GM12878 (cell line): ENCODE measurements at regions of chr10 and their contacts with region 1.

Region 1: DNA sequence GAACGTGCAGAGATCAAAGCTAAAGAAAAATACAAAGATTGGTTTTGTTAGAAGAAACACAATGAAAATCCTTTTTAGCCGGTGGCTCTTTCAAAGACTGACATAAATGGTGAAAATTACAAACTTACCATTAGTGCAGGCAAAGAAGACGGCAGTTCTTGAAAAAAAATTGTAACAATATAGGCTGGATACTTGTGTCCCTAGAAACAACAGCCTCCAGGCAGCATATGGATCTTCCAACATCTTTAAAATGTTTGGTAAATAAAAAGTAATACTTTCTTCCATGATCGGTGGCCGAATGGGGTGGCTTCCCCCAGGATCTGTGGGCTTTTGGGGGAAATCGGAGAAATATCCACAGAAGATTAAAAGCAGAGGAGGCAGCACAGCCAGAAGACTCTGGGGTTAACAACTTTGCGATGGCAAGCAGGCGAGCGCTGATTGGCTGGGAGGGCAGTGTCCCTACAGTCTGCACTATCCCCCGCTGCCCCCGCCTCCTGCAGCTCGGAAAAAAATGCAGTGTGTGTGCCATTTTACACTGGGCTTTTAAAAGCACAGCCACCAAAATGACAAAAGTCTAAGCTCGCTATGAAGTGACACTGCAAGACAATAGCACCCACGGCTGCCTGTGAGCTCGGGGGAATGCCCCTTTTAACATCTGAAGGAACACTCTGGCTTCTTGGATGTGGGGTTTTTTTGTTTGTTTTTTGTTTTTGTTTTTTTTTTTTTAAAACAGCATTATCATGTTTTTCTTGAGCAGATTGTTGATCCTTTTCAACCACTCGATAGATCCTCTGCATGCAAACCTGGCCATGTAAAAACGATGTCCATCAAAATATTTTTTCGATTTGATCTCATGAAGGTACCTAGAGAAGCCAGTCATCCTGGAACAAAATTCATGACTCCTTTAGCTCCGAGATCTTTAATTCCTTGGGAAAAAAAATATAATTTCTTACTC is 31.7 kb upstream of the EPC1 start:
- DNase-seq: peak; percentile 72
- ATAC-seq: peak; percentile 96
- H3K4me3 ChIP-seq: peak overlapping the region; percentile 77
- H3K27ac ChIP-seq: peak overlapping the region; percentile 75
- H3K4me1 ChIP-seq: no peaks in the 10 kb centered on the region
- H3K27me3 ChIP-seq: no peaks in the 10 kb centered on the region
- CTCF ChIP-seq: no peak
- EP300 ChIP-seq: no peak
- POLR2A ChIP-seq: peak; percentile 74
- RAD21 ChIP-seq: no peak

Region 2: GRCh38 chr10:31928549-31929260 is 449.9 kb before region 1 on chr10 and contains the start of gene ARHGAP12:
- CTCF ChIA-PET with region 1: no interaction called
- POLR2A ChIA-PET with region 1: no interaction called
- RAD21 ChIA-PET with region 1: no interaction called
- SMC1A ChIA-PET with region 1: no interaction called
- in situ Hi-C with region 1: no loop called
- intact Hi-C with region 1: loop called (anchors 10 kb)
- DNase-seq: no peak
- ATAC-seq: peak; percentile 84
- H3K4me3 ChIP-seq: peak within 1 kb of the TSS; percentile 70
- H3K27ac ChIP-seq: peak within 1 kb of the TSS; percentile 53
- H3K4me1 ChIP-seq: peaks cover 14% of the 10 kb centered on the region
- H3K27me3 ChIP-seq: no peaks in the 10 kb centered on the region
- CTCF ChIP-seq: no peak
- EP300 ChIP-seq: no peak
- POLR2A ChIP-seq: peak; percentile 89
- RAD21 ChIP-seq: no peak
- polyA plus RNA-seq, gene ARHGAP12: 5.4 to 7.7 TPM

Region 3: GRCh38 chr10:32055813-32056600 is 322.6 kb before region 1 on chr10 and contains the start of gene KIF5B:
- CTCF ChIA-PET with region 1: interaction called, 3 read pairs
- POLR2A ChIA-PET with region 1: interaction called, 3 read pairs
- RAD21 ChIA-PET with region 1: interaction called, 3 read pairs
- SMC1A ChIA-PET with region 1: no interaction called
- in situ Hi-C with region 1: loop called (anchors 10 kb)
- intact Hi-C with region 1: loop called (anchors 5 kb)
- DNase-seq: peak; percentile 44
- ATAC-seq: peak; percentile 90
- H3K4me3 ChIP-seq: peak within 1 kb of the TSS; percentile 83
- H3K27ac ChIP-seq: peak within 1 kb of the TSS; percentile 87
- H3K4me1 ChIP-seq: peaks cover 8% of the 10 kb centered on the region
- H3K27me3 ChIP-seq: no peaks in the 10 kb centered on the region
- CTCF ChIP-seq: no peak
- EP300 ChIP-seq: no peak
- POLR2A ChIP-seq: peak; percentile 99
- RAD21 ChIP-seq: no peak
- polyA plus RNA-seq, gene KIF5B: 14.7 to 15.3 TPM

Region 4: DNA sequence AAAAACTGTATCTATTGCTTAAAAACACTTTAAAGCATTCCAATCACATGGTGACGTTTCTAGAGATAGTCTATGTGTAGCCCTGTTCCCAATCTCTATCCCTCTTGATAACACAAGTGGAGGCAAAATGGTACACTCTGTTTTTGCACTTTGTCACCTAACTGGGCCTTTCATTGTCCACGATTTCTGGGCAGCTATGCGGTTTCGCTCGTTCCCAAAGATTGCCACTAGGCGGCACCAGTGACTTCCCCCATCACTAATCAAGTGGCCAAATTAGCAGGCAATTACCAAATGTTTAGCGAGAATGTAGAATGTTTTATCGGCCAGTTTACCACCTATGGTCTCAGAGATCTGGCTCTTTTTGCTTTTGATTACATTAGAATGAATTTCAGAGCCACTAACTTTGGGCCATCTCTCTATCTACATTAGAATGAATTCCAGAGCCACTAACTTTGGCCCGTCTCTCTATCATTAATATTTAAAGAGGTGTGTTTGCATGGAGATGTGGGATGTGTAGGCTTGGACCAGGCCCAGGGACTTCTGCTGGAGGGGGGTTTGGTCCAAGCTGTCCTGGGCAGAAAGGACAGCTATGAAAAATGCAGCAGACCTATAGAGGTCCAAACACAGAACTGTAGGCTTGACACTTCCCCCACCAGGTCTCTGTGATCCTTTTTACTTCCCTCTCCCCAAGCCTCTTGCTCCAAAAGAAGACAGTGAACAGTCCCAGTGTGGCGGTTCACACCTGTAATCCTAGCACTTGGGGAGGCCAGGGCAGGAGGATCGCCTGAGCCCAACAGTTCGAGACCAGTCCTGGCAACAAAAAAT is 121.8 kb before region 1 on chr10:
- CTCF ChIA-PET with region 1: interaction called, 9 read pairs
- POLR2A ChIA-PET with region 1: interaction called, 4 read pairs
- RAD21 ChIA-PET with region 1: interaction called, 3 read pairs
- SMC1A ChIA-PET with region 1: interaction called, 6 read pairs
- in situ Hi-C with region 1: loop called (anchors 10 kb)
- intact Hi-C with region 1: no loop called
- DNase-seq: peak; percentile 46
- ATAC-seq: peak; percentile 91
- H3K4me3 ChIP-seq: no peak overlapping the region
- H3K27ac ChIP-seq: no peak overlapping the region
- H3K4me1 ChIP-seq: no peaks in the 10 kb centered on the region; the same call in 1 of the 2 replicates
- H3K27me3 ChIP-seq: no peaks in the 10 kb centered on the region
- CTCF ChIP-seq: peak; percentile 93 to 96 (median 94); a peak in 5 of 6 replicates
- EP300 ChIP-seq: no peak
- POLR2A ChIP-seq: no peak
- RAD21 ChIP-seq: peak; percentile 88

Region 5: GRCh38 chr10:32308027-32308603 is 70.5 kb before region 1 on chr10:
- CTCF ChIA-PET with region 1: no interaction called
- POLR2A ChIA-PET with region 1: no interaction called
- RAD21 ChIA-PET with region 1: no interaction called
- SMC1A ChIA-PET with region 1: no interaction called
- in situ Hi-C with region 1: no loop called
- intact Hi-C with region 1: no loop called
- DNase-seq: no peak
- ATAC-seq: peak; percentile 92
- H3K4me3 ChIP-seq: no peak overlapping the region
- H3K27ac ChIP-seq: no peak overlapping the region
- H3K4me1 ChIP-seq: no peaks in the 10 kb centered on the region
- H3K27me3 ChIP-seq: no peaks in the 10 kb centered on the region
- CTCF ChIP-seq: no peak
- EP300 ChIP-seq: no peak
- POLR2A ChIP-seq: no peak
- RAD21 ChIP-seq: no peak

Region 6: DNA sequence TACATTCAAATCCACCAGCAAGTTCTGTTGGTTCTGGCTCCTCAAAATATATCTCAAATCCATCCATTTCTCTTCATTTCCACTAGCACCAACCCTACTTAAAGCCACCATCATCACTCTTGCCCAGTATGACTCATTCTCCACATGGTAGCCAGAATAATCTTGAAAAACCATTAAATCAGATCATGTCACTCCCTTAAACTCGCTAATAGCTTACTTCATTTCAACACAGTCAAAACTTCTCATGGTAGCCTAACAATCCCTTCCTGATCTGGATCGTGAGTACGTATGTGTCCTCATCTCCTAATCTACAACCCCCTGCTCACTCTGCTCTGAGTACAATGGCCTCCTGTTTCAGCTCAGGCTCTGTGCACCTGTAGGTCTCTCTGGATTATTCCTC is 40.4 kb before region 1 on chr10:
- CTCF ChIA-PET with region 1: interaction called, 15 read pairs
- POLR2A ChIA-PET with region 1: interaction called, 5 read pairs
- RAD21 ChIA-PET with region 1: interaction called, 3 read pairs
- SMC1A ChIA-PET with region 1: interaction called, 4 read pairs
- in situ Hi-C with region 1: no loop called
- intact Hi-C with region 1: no loop called
- DNase-seq: no peak
- ATAC-seq: no peak
- H3K4me3 ChIP-seq: no peak overlapping the region
- H3K27ac ChIP-seq: no peak overlapping the region
- H3K4me1 ChIP-seq: peaks cover 16% of the 10 kb centered on the region
- H3K27me3 ChIP-seq: no peaks in the 10 kb centered on the region
- CTCF ChIP-seq: no peak
- EP300 ChIP-seq: no peak
- POLR2A ChIP-seq: no peak
- RAD21 ChIP-seq: no peak

Region 7: GRCh38 chr10:32367793-32368453 is 10.7 kb before region 1 on chr10:
- CTCF ChIA-PET with region 1: interaction called, 32 read pairs
- POLR2A ChIA-PET with region 1: interaction called, 5 read pairs
- RAD21 ChIA-PET with region 1: interaction called, 15 read pairs
- SMC1A ChIA-PET with region 1: interaction called, 6 read pairs
- in situ Hi-C with region 1: no loop called
- intact Hi-C with region 1: no loop called
- DNase-seq: no peak
- ATAC-seq: peak; percentile 65
- H3K4me3 ChIP-seq: no peak overlapping the region
- H3K27ac ChIP-seq: no peak overlapping the region
- H3K4me1 ChIP-seq: no peaks in the 10 kb centered on the region
- H3K27me3 ChIP-seq: no peaks in the 10 kb centered on the region
- CTCF ChIP-seq: peak; percentile 61 to 80 (median 69)
- EP300 ChIP-seq: no peak
- POLR2A ChIP-seq: no peak
- RAD21 ChIP-seq: peak; percentile 75

Region 8: GRCh38 chr10:32445740-32446535 is 67.3 kb after region 1 on chr10 and contains the start of gene CCDC7:
- CTCF ChIA-PET with region 1: interaction called, 9 read pairs
- POLR2A ChIA-PET with region 1: interaction called, 9 read pairs
- RAD21 ChIA-PET with region 1: interaction called, 13 read pairs
- SMC1A ChIA-PET with region 1: interaction called, 8 read pairs
- in situ Hi-C with region 1: no loop called
- intact Hi-C with region 1: loop called (anchors 1 kb)
- DNase-seq: peak; percentile 62
- ATAC-seq: peak; percentile 98
- H3K4me3 ChIP-seq: peak within 1 kb of the TSS; percentile 97
- H3K27ac ChIP-seq: peak within 1 kb of the TSS; percentile 99
- H3K4me1 ChIP-seq: no peaks in the 10 kb centered on the region
- H3K27me3 ChIP-seq: no peaks in the 10 kb centered on the region
- CTCF ChIP-seq: peak; percentile 43 to 66 (median 61); a peak in 5 of 6 replicates
- EP300 ChIP-seq: 0 out of 4 replicates have a peak, but pooled peaks of 1 of the 2 experiments have one; percentile 32
- POLR2A ChIP-seq: peak; percentile 95
- RAD21 ChIP-seq: peak; percentile 31
- polyA plus RNA-seq, gene CCDC7: 2.1 to 3.3 TPM

Region 9: GRCh38 chr10:32582946-32583345 is 204.3 kb after region 1 on chr10:
- CTCF ChIA-PET with region 1: no interaction called
- POLR2A ChIA-PET with region 1: no interaction called
- RAD21 ChIA-PET with region 1: no interaction called
- SMC1A ChIA-PET with region 1: no interaction called
- in situ Hi-C with region 1: no loop called
- intact Hi-C with region 1: no loop called
- DNase-seq: no peak
- ATAC-seq: no peak
- H3K4me3 ChIP-seq: no peak overlapping the region
- H3K27ac ChIP-seq: no peak overlapping the region
- H3K4me1 ChIP-seq: no peaks in the 10 kb centered on the region
- H3K27me3 ChIP-seq: no peaks in the 10 kb centered on the region
- CTCF ChIP-seq: no peak
- EP300 ChIP-seq: no peak
- POLR2A ChIP-seq: no peak
- RAD21 ChIP-seq: no peak